ENCODE measurements at regions of chrX and their contacts with region 1.

Region 1: GRCh38 chrX:138745196-138745595 is 33.7 kb upstream of the FGF13 start:
- DNase-seq: no peak
- H3K4me3 ChIP-seq: no peak overlapping the region
- H3K27ac ChIP-seq: no peak overlapping the region
- H3K4me1 ChIP-seq: no peaks in the 10 kb centered on the region
- H3K27me3 ChIP-seq: no peaks in the 10 kb centered on the region
- CTCF ChIP-seq: peak; percentile 15 to 60 (median 28)
- EP300 ChIP-seq: no peak
- POLR2A ChIP-seq: no peak

Region 2: DNA sequence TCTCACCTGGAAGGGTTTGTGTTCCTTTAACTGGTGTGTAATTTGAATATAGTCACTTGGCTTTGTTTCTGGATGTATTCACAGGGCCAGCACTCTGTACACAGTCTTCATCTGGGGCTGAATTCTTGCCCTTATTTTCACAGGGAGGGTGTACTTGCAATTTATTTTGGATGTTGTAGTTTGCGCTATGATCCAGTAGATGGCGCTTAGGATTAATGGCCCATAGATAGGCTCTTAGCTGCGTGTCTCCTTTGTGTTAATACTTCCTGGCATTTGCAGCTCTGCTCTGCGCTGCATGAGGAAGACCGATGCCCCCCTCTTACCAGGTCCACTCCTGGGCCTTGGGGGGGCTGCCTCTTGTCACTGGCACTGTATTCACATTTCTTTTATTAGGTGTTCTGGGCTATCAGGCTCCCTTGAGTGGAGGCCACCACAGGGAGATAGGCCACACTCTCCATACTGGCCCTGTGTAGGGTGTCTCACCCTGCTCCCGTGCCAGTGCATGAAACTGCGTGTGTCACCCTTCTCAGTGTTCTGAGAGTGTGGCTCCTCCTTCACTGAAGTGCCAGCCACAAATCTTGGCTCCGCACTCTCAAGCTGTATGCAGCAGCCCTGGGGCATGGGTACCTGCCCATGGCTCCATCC is 617.0 kb before region 1 on chrX:
- intact Hi-C with region 1: loop called (anchors 1 kb)
- DNase-seq: no peak
- H3K4me3 ChIP-seq: no peak overlapping the region
- H3K27ac ChIP-seq: no peak overlapping the region
- H3K4me1 ChIP-seq: no peaks in the 10 kb centered on the region
- H3K27me3 ChIP-seq: no peaks in the 10 kb centered on the region
- CTCF ChIP-seq: peak in 1 of 4 experiments; percentile 43
- EP300 ChIP-seq: no peak
- POLR2A ChIP-seq: no peak

Region 3: DNA sequence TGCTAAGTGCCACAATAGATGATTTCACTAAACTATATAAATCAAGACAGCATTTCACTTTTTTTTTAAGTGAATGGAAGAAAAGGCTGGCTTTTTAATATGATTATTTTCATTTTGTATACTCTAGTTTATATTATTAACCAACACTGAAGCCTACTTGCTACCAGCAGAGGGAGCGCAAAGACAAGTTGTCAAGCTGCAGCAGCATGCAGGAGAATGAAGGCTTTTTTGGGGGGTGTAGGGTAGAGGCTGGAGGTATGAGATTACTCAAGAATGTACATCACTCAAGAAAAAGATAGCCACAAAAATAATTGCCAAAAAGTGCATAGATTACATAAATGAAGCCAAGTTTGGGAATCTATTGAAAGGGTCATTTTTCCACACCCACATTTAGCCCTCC is 553.2 kb before region 1 on chrX:
- intact Hi-C with region 1: loop called (anchors 2 kb)
- DNase-seq: no peak
- H3K4me3 ChIP-seq: no peak overlapping the region
- H3K27ac ChIP-seq: no peak overlapping the region
- H3K4me1 ChIP-seq: no peaks in the 10 kb centered on the region
- H3K27me3 ChIP-seq: no peaks in the 10 kb centered on the region
- CTCF ChIP-seq: peak in 2 of 4 experiments; percentile 16 to 24
- EP300 ChIP-seq: no peak
- POLR2A ChIP-seq: no peak

Region 4: GRCh38 chrX:138298259-138298658 is 446.9 kb before region 1 on chrX:
- intact Hi-C with region 1: loop called (anchors 5 kb)
- DNase-seq: no peak
- H3K4me3 ChIP-seq: no peak overlapping the region
- H3K27ac ChIP-seq: no peak overlapping the region
- H3K4me1 ChIP-seq: no peaks in the 10 kb centered on the region
- H3K27me3 ChIP-seq: no peaks in the 10 kb centered on the region
- CTCF ChIP-seq: peak in 1 of 4 experiments; percentile 18
- EP300 ChIP-seq: no peak
- POLR2A ChIP-seq: no peak

Region 5: GRCh38 chrX:138929926-138930582 is 184.9 kb after region 1 on chrX:
- intact Hi-C with region 1: no loop called
- DNase-seq: no peak
- H3K4me3 ChIP-seq: no peak overlapping the region
- H3K27ac ChIP-seq: no peak overlapping the region
- H3K4me1 ChIP-seq: no peaks in the 10 kb centered on the region
- H3K27me3 ChIP-seq: no peaks in the 10 kb centered on the region
- CTCF ChIP-seq: no peak
- EP300 ChIP-seq: no peak
- POLR2A ChIP-seq: no peak